A549 (cell line): ENCODE measurements at regions of chr1 and their contacts with region 1.

Region 1: DNA sequence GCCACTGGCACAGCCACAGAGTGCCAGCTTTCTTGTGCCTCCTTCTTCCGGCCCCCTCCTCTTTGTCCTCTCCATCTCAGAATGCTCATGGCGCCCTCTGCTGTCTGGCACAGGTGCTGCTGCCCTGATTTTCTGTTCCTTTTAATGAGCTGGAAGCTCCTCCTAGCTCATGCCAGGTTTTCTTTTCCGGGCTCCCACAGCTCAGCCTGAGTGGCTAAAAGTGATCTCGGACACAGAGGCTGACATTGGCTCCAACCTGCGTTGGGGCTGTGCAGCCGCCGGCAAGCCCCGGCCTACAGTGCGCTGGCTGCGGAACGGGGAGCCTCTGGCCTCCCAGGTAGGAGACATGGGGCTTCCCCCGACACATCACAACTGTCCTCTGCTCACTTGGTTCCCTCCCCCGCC is 18.7 kb downstream of the CNTN2 start:
- DNase-seq: peak; percentile 62 to 78
- ATAC-seq: peak; percentile 53 to 86; a peak in 4 of 6 replicates
- H3K4me3 ChIP-seq: no peak overlapping the region
- H3K27ac ChIP-seq: no peak overlapping the region
- H3K4me1 ChIP-seq: no peaks in the 10 kb centered on the region
- CTCF ChIP-seq: peak; percentile 88
- EP300 ChIP-seq: no peak
- POLR2A ChIP-seq: no peak
- RAD21 ChIP-seq: peak; percentile 80 to 89

Region 2: DNA sequence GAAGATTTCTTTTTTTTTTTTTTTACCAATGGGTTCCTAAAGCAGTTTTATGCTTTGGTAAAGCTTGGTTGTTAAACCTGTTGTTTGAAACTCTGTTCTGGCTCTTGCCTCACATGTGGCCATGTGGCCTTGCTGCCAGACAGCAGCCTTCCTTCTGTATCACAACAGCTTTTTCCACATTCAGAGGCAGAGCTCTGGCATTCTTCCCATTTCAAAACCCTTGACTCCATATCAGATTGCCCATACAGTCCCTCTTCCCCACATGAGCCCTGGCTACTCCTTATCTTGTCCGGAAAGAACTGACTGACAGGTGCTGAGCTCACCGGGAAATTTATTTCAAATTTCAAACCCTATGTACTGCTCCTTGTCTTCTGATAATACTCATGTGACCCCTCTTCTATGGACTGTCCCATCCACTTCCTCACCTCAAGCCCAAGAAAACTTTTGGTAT is 1335.2 kb before region 1 on chr1:
- CTCF ChIA-PET with region 1: no interaction called
- POLR2A ChIA-PET with region 1: no interaction called
- DNase-seq: no peak
- ATAC-seq: no peak
- H3K4me3 ChIP-seq: no peak overlapping the region
- H3K27ac ChIP-seq: no peak overlapping the region
- H3K4me1 ChIP-seq: no peaks in the 10 kb centered on the region
- CTCF ChIP-seq: no peak
- EP300 ChIP-seq: no peak
- POLR2A ChIP-seq: no peak
- RAD21 ChIP-seq: no peak

Region 3: GRCh38 chr1:204858363-204858821 is 203.3 kb before region 1 on chr1:
- CTCF ChIA-PET with region 1: no interaction called
- POLR2A ChIA-PET with region 1: no interaction called
- DNase-seq: no peak
- ATAC-seq: no peak
- H3K4me3 ChIP-seq: no peak overlapping the region
- H3K27ac ChIP-seq: no peak overlapping the region
- H3K4me1 ChIP-seq: no peaks in the 10 kb centered on the region
- CTCF ChIP-seq: no peak
- EP300 ChIP-seq: no peak
- POLR2A ChIP-seq: no peak
- RAD21 ChIP-seq: no peak

Region 4: DNA sequence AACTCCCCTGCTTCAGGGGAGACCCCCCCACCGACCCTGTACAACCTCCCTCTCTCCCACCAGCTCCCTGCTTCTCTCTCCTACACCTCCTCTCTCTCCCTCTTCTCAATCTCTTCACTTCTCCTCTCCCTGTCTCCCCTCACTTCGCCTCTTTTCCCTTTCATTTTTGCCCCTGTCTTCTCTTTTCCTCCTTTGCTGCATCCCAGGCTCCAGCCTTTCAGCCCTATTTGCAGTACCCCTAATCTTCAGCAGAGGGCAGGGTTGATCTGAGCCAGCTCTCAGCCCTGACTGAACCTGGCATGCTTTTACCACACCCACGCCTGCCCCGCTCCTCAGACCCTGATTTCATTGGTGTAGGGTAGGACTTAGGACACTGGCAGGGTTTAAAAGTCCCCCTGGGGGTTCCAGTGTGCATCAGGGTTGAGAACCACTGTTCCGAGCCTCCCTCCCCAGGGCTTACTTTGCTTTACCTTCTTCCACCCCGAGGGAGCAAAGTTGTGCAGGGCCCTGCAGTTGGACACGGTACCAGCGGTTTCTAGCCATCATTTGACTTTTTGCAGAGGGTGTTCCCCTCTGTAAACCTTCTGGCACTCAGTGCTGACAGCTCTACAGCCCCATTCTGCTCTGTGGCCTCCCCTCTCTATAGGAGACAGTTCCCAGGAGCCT is 86.0 kb before region 1 on chr1:
- CTCF ChIA-PET with region 1: interaction called, 115 read pairs
- POLR2A ChIA-PET with region 1: no interaction called
- DNase-seq: peak; percentile 41 to 91
- ATAC-seq: peak; percentile 78 to 93
- H3K4me3 ChIP-seq: no peak overlapping the region
- H3K27ac ChIP-seq: no peak overlapping the region
- H3K4me1 ChIP-seq: peaks cover 12% of the 10 kb centered on the region
- CTCF ChIP-seq: peak; percentile 60
- EP300 ChIP-seq: no peak
- POLR2A ChIP-seq: no peak
- RAD21 ChIP-seq: peak; percentile 71 to 79

Region 5: GRCh38 chr1:204997591-204998355 is 63.9 kb before region 1 on chr1:
- CTCF ChIA-PET with region 1: interaction called, 52 read pairs
- POLR2A ChIA-PET with region 1: no interaction called
- DNase-seq: no peak
- ATAC-seq: no peak
- H3K4me3 ChIP-seq: no peak overlapping the region
- H3K27ac ChIP-seq: no peak overlapping the region
- H3K4me1 ChIP-seq: no peaks in the 10 kb centered on the region
- CTCF ChIP-seq: no peak
- EP300 ChIP-seq: no peak
- POLR2A ChIP-seq: no peak
- RAD21 ChIP-seq: no peak

Region 6: DNA sequence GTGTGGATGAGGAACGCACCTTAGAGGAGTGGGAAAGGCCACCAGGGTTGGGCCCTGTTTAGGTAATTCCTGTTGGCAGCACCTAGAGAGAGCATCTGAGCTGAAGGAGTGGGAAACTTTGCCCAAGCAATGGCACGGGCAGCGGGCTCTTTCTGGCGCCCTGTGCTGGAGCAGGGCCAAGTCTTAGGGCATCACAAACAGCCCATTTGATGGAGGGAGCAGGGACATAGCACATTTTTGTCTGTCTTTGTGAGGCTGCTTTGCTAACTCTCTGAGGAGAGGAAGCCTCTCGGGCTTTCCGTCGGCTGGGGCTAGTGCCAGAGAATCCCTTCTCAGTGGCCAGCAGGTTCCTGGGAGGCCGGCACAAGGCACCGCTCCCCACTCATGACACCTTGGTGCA is 41.2 kb before region 1 on chr1:
- CTCF ChIA-PET with region 1: interaction called, 22 read pairs
- POLR2A ChIA-PET with region 1: no interaction called
- DNase-seq: no peak
- ATAC-seq: no peak
- H3K4me3 ChIP-seq: no peak overlapping the region
- H3K27ac ChIP-seq: no peak overlapping the region
- H3K4me1 ChIP-seq: no peaks in the 10 kb centered on the region
- CTCF ChIP-seq: no peak
- EP300 ChIP-seq: no peak
- POLR2A ChIP-seq: no peak
- RAD21 ChIP-seq: no peak

Region 7: GRCh38 chr1:205042911-205043806 is 18.5 kb before region 1 on chr1 and contains the start of gene CNTN2:
- CTCF ChIA-PET with region 1: interaction called, 38 read pairs
- POLR2A ChIA-PET with region 1: interaction called, 3 read pairs
- DNase-seq: no peak
- ATAC-seq: peak; percentile 27 to 70; a peak in 4 of 6 replicates
- H3K4me3 ChIP-seq: peak within 1 kb of the TSS; percentile 10; the same call in 1 of the 3 replicates
- H3K27ac ChIP-seq: no peak within 1 kb of the TSS
- H3K4me1 ChIP-seq: peaks cover 5% of the 10 kb centered on the region; the same call in 1 of the 3 replicates
- CTCF ChIP-seq: no peak
- EP300 ChIP-seq: no peak
- POLR2A ChIP-seq: no peak
- RAD21 ChIP-seq: no peak
- polyA plus RNA-seq, gene CNTN2: not detected in 2 replicates

Region 8: DNA sequence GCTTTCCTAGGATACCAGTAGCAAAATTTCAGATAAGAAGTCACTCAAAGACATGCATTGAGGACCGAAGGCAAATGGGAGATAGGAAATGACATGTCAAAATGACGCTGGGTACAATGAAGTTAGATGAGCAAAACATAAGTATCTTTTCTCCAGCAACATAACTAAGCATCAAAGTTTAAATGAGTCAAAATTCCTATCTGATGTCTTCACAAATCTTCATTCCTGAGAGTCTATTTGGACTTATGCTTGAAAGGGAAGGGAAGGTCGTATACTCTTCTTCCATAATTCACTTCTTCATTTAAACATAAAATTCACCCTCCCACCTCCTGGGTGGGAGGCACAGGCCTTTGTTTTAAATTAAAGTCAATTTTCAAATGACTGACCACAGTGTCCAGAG is 26.7 kb after region 1 on chr1:
- CTCF ChIA-PET with region 1: interaction called, 134 read pairs
- POLR2A ChIA-PET with region 1: no interaction called
- DNase-seq: no peak
- ATAC-seq: no peak
- H3K4me3 ChIP-seq: no peak overlapping the region
- H3K27ac ChIP-seq: no peak overlapping the region
- H3K4me1 ChIP-seq: no peaks in the 10 kb centered on the region
- CTCF ChIP-seq: no peak
- EP300 ChIP-seq: no peak
- POLR2A ChIP-seq: no peak
- RAD21 ChIP-seq: no peak